Mammary epithelial cell (primary cell): ENCODE measurements at regions of chr2 and their contacts with region 1.

Region 1: DNA sequence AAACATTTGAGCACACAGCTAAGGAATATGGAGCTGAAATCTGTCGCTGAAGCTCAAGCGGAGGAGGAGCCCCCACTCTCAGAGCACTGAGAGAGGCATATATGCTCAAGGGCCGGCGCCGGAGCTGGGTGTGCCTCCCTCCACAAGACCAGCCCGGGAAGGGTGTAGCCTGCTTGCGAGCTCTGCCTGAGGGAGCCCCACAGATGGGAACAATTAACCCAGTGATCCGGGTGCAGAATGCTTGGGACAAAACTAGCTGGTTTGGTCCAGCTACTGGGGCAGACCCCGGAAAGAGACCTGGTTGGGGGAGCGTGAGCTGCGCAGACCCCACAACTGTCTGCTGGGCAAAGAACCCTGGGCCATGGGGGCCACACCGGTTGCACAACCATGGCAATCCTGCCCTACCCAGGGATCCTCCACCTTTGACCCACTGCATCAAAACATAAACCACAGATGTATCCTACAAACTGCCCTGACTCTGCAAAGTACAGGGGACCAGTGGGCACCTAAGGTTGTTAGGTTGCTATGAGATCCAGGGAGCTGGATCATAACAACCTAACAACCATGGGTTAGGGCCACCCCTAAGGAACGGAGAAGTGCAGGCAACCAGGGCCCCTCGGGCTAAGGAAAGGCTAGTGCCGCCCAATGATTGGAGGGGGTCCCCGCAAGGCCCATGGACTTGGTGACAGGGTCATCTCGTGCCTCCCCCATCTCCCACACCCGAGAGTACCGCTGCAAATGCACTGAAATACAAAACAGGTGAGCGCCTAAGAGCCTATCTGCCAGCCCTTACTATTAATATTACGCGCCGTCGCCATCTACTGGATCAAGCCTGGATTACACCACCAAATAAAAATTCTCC is 53.4 kb upstream of the SCN1A start:
- DNase-seq: peak; percentile 43
- H3K4me3 ChIP-seq: no peak overlapping the region
- H3K27ac ChIP-seq: no peak overlapping the region
- H3K4me1 ChIP-seq: peaks cover 13% of the 10 kb centered on the region
- H3K27me3 ChIP-seq: no peaks in the 10 kb centered on the region
- CTCF ChIP-seq: peak; percentile 50 to 76

Region 2: GRCh38 chr2:164934401-164935117 is 1246.6 kb before region 1 on chr2:
- CTCF ChIA-PET with region 1: interaction called, 14 read pairs
- dilution Hi-C with region 1: no loop called
- in situ Hi-C with region 1: no loop called
- intact Hi-C with region 1: no loop called
- DNase-seq: no peak
- H3K4me3 ChIP-seq: no peak overlapping the region
- H3K27ac ChIP-seq: no peak overlapping the region
- H3K4me1 ChIP-seq: no peaks in the 10 kb centered on the region
- H3K27me3 ChIP-seq: no peaks in the 10 kb centered on the region
- CTCF ChIP-seq: no peak

Region 3: DNA sequence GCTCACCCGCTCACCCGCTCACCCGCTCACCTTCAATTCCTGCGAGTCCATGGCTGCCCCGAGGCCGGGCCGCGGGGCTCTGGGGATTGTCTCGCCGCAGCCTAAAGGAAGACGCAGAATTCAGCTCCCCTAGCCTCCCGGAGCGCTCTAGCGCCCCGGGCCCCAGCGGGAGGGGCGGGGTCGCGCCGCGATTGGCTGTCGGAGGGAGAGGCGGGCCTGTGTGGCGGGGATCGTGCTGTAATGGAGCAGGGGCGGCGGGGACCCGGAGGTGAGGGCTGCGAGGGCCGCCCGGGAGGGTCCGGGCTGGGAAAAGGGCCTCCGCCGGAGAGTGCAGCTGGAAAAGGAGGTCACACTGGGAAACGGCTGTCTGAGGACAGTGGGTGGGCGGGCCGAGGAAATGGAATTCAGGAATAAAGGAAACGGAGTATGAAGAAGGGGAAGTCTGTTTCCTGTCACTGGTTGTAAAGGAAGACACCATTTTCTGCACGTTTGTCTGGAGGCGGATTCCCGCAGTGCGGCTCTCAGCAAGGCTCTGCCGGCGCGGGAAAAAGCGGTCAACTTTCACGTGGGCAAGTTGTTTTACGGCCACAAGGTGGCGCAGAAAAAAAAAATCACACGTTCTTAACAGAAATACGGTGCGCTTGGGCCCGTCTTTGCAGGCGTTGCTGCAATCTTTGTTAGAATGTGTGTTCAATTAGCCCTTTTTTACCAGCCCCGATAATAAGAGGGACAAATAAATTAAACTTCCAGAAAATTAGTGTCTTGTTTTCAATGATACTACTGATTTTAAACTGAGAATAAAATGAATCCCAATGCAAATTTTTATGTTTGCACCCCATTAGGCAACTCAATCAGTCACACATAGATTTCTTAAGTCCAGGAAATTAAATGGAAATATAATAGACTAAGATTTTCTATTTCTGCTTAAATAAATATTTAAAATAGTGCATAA is 227.3 kb before region 1 on chr2 and contains the start of gene TTC21B:
- CTCF ChIA-PET with region 1: no interaction called
- dilution Hi-C with region 1: no loop called
- in situ Hi-C with region 1: no loop called
- intact Hi-C with region 1: loop called (anchors 1 kb)
- DNase-seq: peak; percentile 94
- H3K4me3 ChIP-seq: peak within 1 kb of the TSS; percentile 79 to 95 (median 84)
- H3K27ac ChIP-seq: peak within 1 kb of the TSS; percentile 85
- H3K4me1 ChIP-seq: peaks cover 5% of the 10 kb centered on the region
- H3K27me3 ChIP-seq: no peaks in the 10 kb centered on the region
- CTCF ChIP-seq: peak; percentile 68 to 71
- total RNA-seq, gene TTC21B: 9.3 to 20.7 TPM

Region 4: DNA sequence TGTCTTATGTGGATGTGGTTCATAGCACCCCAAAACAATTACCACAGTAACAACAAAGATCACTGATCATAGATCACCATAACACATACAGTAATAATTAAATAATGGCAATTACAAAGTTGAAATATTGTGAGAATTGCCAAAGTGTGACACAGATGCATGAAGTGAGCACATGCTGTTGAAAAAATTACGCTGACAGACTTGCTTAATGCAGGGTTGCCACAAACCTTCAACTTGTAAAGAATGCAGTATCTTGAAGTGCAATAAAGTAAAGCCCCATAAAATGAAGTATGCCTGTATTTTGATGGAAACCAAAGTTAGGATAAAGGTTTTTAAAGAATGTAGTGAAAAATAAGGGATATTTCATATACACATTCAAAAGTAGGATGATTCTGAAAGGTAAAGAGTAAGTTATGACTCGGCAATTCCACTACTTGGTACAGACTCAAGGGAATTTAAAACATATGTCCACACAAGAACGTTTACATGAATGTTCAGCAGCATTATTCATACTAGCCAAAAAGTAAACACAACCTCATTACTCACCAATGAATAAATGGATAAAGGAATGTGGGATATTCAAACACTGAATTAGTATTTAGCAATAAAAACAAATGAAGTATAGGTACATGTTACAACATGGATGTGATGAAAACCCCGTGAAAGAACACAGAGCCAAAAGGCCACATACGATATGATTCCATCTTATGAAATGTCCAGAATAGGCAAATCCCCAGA is 133.0 kb after region 1 on chr2:
- CTCF ChIA-PET with region 1: no interaction called
- dilution Hi-C with region 1: no loop called
- in situ Hi-C with region 1: no loop called
- intact Hi-C with region 1: loop called (anchors 5 kb)
- DNase-seq: peak; percentile 79
- H3K4me3 ChIP-seq: no peak overlapping the region
- H3K27ac ChIP-seq: peak overlapping the region; percentile 68
- H3K4me1 ChIP-seq: peaks cover 7% of the 10 kb centered on the region
- H3K27me3 ChIP-seq: no peaks in the 10 kb centered on the region
- CTCF ChIP-seq: no peak

Region 5: DNA sequence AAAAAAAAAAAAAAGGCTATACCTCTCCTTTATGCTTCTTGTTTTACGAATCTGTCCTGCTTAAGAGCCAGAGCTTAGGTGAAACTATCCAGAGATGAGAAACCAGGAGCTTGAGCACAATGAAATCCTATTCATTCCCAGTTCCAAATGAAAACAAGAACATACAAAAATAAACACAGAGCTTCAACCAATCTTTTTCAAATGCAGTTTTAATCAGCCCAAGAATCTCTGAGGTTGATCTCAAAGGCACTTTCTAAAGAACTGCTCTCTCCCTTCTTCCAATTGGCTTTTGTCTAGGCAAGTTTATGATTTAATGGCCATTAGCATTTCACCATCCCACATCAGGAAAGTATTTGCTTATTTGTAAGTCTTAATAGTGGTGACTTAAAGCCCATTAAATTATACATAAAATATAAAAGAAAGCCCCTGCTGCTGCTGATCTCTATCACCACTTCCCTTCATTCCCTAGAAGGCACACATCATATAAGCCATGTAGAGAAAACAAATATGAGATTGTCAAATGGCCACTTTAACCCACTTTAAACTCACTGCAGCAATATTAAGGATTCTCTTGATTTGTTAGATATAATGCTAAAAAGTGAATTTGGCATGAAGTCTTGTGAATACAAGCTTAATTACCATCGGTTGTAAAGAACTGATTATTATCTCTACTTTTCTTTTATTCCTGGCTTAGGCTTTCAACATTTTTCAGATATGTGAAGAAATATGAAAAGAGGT is 223.8 kb after region 1 on chr2:
- CTCF ChIA-PET with region 1: no interaction called
- dilution Hi-C with region 1: no loop called
- in situ Hi-C with region 1: loop called in 1 of 2 experiments (anchors 10 kb)
- intact Hi-C with region 1: loop called (anchors 2 kb)
- DNase-seq: no peak
- H3K4me3 ChIP-seq: no peak overlapping the region
- H3K27ac ChIP-seq: no peak overlapping the region
- H3K4me1 ChIP-seq: no peaks in the 10 kb centered on the region
- H3K27me3 ChIP-seq: no peaks in the 10 kb centered on the region
- CTCF ChIP-seq: no peak

Region 6: GRCh38 chr2:166417669-166418068 is 236.5 kb after region 1 on chr2:
- CTCF ChIA-PET with region 1: interaction called, 3 read pairs
- dilution Hi-C with region 1: no loop called
- in situ Hi-C with region 1: loop called in 1 of 2 experiments (anchors 5 kb)
- intact Hi-C with region 1: loop called (anchors 1 kb)
- DNase-seq: peak; percentile 37
- H3K4me3 ChIP-seq: no peak overlapping the region
- H3K27ac ChIP-seq: no peak overlapping the region
- H3K4me1 ChIP-seq: peaks cover 2% of the 10 kb centered on the region
- H3K27me3 ChIP-seq: no peaks in the 10 kb centered on the region
- CTCF ChIP-seq: peak in 1 of 2 donors; percentile 23